ENCODE measurements at regions of chr9 and their contacts with region 1.

Region 1: GRCh38 chr9:33290247-33291030 is at the start of gene NFX1:
- DNase-seq: peak; percentile 89 to 99 (median 95)

Region 2: GRCh38 chr9:33264473-33265177 is 25.8 kb before region 1 on chr9 and contains the starts of genes BAG1 and CHMP5:
- intact Hi-C with region 1: loop called (anchors 2 kb)
- DNase-seq: peak; percentile 96 to 100 (median 100)

Region 3: GRCh38 chr9:33473643-33474352 is 183.4 kb after region 1 on chr9 and contains the start of gene NOL6:
- intact Hi-C with region 1: loop called (anchors 10 kb)
- DNase-seq: peak; percentile 91 to 99 (median 98)